CD8-positive, alpha-beta T cell (primary cell): ENCODE measurements at regions of chr11 and their contacts with region 1.

Region 1: GRCh38 chr11:118778898-118779297 is 12.1 kb downstream of the DDX6 start:
- DNase-seq: no peak
- ATAC-seq: no peak
- H3K4me3 ChIP-seq: no peak overlapping the region
- H3K4me3 Mint-ChIP-seq: no peak overlapping the region
- H3K27ac ChIP-seq: no peak overlapping the region
- H3K27ac Mint-ChIP-seq: no peak overlapping the region
- H3K4me1 ChIP-seq: peaks cover 81% of the 10 kb centered on the region
- H3K4me1 Mint-ChIP-seq: peaks cover 84% of the 10 kb centered on the region
- H3K27me3 ChIP-seq: no peaks in the 10 kb centered on the region
- H3K27me3 Mint-ChIP-seq: no peaks in the 10 kb centered on the region
- CTCF ChIP-seq: no peak

Region 2: DNA sequence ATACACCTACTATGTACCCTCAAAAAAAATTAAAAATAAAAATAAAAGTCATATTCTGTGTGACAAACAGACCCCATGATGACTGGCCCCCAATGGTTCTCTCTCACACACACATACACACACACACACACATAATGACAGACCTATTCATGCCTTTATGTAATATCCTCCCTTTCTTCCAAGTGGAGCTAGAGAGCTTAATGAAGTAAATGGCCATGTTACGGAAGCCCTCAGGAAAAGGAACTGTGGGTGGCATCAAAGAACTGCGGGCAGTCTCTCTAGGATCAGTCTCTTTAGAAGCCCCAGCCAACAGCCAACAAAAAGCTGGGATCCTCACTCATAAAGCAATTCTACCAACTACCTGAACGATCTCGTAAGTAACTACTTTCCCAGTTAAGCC is 1806.2 kb before region 1 on chr11:
- CTCF ChIA-PET with region 1: no interaction called
- POLR2A ChIA-PET with region 1: no interaction called
- intact Hi-C with region 1: no loop called
- DNase-seq: no peak
- ATAC-seq: no peak
- H3K4me3 ChIP-seq: no peak overlapping the region
- H3K4me3 Mint-ChIP-seq: no peak overlapping the region
- H3K27ac ChIP-seq: no peak overlapping the region
- H3K27ac Mint-ChIP-seq: no peak overlapping the region
- H3K4me1 ChIP-seq: no peaks in the 10 kb centered on the region
- H3K4me1 Mint-ChIP-seq: peaks cover 54% of the 10 kb centered on the region
- H3K27me3 ChIP-seq: no peaks in the 10 kb centered on the region
- H3K27me3 Mint-ChIP-seq: no peaks in the 10 kb centered on the region
- CTCF ChIP-seq: no peak

Region 3: DNA sequence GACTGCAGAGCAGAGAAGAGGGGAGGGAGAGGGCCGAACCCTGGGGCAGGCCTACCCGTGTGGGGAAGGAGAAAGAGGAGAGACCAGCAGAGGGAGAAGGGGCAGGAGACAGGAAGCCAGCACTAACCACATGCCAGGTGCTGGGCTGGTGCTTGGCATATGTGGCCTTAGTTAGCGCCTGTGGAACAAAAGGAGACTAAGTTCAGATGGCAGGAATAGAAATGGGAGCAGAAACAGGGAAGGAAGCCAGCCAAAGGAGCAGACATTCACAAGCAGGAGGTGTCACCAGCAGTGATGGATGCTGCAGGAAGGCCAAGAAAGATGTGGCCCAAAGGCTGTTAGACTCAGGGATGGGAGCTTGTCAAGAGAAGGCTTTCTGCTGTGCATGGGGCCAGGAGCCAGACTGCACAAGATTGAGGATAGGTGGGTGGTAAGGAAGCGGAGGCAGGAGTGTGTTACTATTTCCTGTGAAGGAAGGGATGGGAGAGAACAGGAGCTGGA is 126.2 kb before region 1 on chr11:
- CTCF ChIA-PET with region 1: no interaction called
- POLR2A ChIA-PET with region 1: no interaction called
- intact Hi-C with region 1: no loop called
- DNase-seq: no peak
- ATAC-seq: no peak
- H3K4me3 ChIP-seq: no peak overlapping the region
- H3K4me3 Mint-ChIP-seq: no peak overlapping the region
- H3K27ac ChIP-seq: no peak overlapping the region
- H3K27ac Mint-ChIP-seq: peak overlapping the region; percentile 66
- H3K4me1 ChIP-seq: no peaks in the 10 kb centered on the region
- H3K4me1 Mint-ChIP-seq: peaks cover 7% of the 10 kb centered on the region
- H3K27me3 ChIP-seq: no peaks in the 10 kb centered on the region
- H3K27me3 Mint-ChIP-seq: no peaks in the 10 kb centered on the region
- CTCF ChIP-seq: no peak

Region 4: DNA sequence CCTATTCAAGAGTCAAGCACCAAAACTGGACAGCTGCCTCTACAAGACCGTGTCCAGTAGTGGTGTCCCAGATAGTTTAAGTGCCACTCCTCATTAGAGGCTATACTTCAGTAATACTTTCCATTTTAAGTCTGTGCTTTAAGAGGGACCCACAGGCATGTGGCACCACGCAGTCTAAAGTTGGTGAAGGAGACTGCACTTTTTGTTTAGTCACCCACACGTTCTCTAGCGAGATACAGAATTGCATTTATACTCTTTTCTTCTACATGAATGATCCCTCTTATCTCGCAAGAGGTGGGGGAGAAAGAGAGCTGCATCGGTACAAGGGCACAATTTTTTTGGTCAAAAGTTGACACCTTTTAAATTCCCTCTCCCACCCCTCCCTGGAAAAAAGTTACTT is 29.5 kb before region 1 on chr11:
- CTCF ChIA-PET with region 1: no interaction called
- POLR2A ChIA-PET with region 1: no interaction called
- intact Hi-C with region 1: no loop called
- DNase-seq: no peak
- ATAC-seq: no peak
- H3K4me3 ChIP-seq: no peak overlapping the region
- H3K4me3 Mint-ChIP-seq: no peak overlapping the region
- H3K27ac ChIP-seq: no peak overlapping the region
- H3K27ac Mint-ChIP-seq: peak overlapping the region; percentile 24
- H3K4me1 ChIP-seq: no peaks in the 10 kb centered on the region
- H3K4me1 Mint-ChIP-seq: peaks cover 32% of the 10 kb centered on the region
- H3K27me3 ChIP-seq: no peaks in the 10 kb centered on the region
- H3K27me3 Mint-ChIP-seq: no peaks in the 10 kb centered on the region
- CTCF ChIP-seq: no peak

Region 5: DNA sequence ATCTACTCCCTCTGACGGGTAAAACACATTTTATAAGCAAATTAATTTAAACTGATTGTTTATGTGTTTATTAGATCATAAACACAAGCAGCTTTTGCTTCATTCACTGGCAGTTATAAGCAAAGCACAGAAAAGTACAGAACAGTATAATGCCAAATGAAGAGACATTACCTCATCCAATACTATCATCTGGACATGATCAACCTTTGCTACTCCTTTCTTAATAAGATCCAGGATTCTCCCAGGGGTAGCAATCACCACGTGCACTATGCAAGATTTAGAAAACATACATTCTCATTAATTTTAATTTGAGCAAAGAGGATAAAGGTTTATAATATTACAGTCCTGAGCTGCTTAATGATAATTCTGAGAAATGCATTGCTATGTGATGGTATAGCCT is 15.9 kb before region 1 on chr11:
- CTCF ChIA-PET with region 1: interaction called, 4 read pairs
- POLR2A ChIA-PET with region 1: interaction called, 3 read pairs
- intact Hi-C with region 1: loop called in 1 of 2 experiments (anchors 2 kb)
- DNase-seq: no peak
- ATAC-seq: no peak
- H3K4me3 ChIP-seq: no peak overlapping the region
- H3K4me3 Mint-ChIP-seq: no peak overlapping the region
- H3K27ac ChIP-seq: no peak overlapping the region
- H3K27ac Mint-ChIP-seq: no peak overlapping the region
- H3K4me1 ChIP-seq: peaks cover 2% of the 10 kb centered on the region
- H3K4me1 Mint-ChIP-seq: peaks cover 33% of the 10 kb centered on the region
- H3K27me3 ChIP-seq: no peaks in the 10 kb centered on the region
- H3K27me3 Mint-ChIP-seq: no peaks in the 10 kb centered on the region
- CTCF ChIP-seq: no peak

Region 6: GRCh38 chr11:118851970-118852369 is 73.1 kb after region 1 on chr11:
- CTCF ChIA-PET with region 1: no interaction called
- POLR2A ChIA-PET with region 1: no interaction called
- intact Hi-C with region 1: no loop called
- DNase-seq: no peak
- ATAC-seq: no peak
- H3K4me3 ChIP-seq: no peak overlapping the region
- H3K4me3 Mint-ChIP-seq: no peak overlapping the region
- H3K27ac ChIP-seq: no peak overlapping the region
- H3K27ac Mint-ChIP-seq: no peak overlapping the region
- H3K4me1 ChIP-seq: no peaks in the 10 kb centered on the region
- H3K4me1 Mint-ChIP-seq: peaks cover 12% of the 10 kb centered on the region
- H3K27me3 ChIP-seq: no peaks in the 10 kb centered on the region
- H3K27me3 Mint-ChIP-seq: no peaks in the 10 kb centered on the region
- CTCF ChIP-seq: no peak